PC-9 (cell line): ENCODE measurements at regions of chr17 and their contacts with region 1.

Region 1: GRCh38 chr17:29807520-29808351 is 122.3 kb downstream of the SSH2 start:
- DNase-seq: peak in 1 of 2 experiments; percentile 55
- H3K4me3 ChIP-seq: no peak overlapping the region
- H3K27ac ChIP-seq: no peak overlapping the region
- H3K4me1 ChIP-seq: no peaks in the 10 kb centered on the region
- H3K27me3 ChIP-seq: no peaks in the 10 kb centered on the region
- CTCF ChIP-seq: peak; percentile 87

Region 2: GRCh38 chr17:29574732-29575504 is 232.8 kb before region 1 on chr17:
- CTCF ChIA-PET with region 1: no interaction called
- POLR2A ChIA-PET with region 1: no interaction called
- intact Hi-C with region 1: no loop called
- DNase-seq: peak in 1 of 2 experiments; percentile 15
- H3K4me3 ChIP-seq: no peak overlapping the region
- H3K27ac ChIP-seq: no peak overlapping the region
- H3K4me1 ChIP-seq: no peaks in the 10 kb centered on the region
- H3K27me3 ChIP-seq: no peaks in the 10 kb centered on the region
- CTCF ChIP-seq: no peak

Region 3: GRCh38 chr17:29613352-29613837 is 194.3 kb before region 1 on chr17:
- CTCF ChIA-PET with region 1: interaction called, 10 read pairs
- POLR2A ChIA-PET with region 1: no interaction called
- intact Hi-C with region 1: no loop called
- DNase-seq: no peak
- H3K4me3 ChIP-seq: no peak overlapping the region
- H3K27ac ChIP-seq: no peak overlapping the region
- H3K4me1 ChIP-seq: no peaks in the 10 kb centered on the region
- H3K27me3 ChIP-seq: no peaks in the 10 kb centered on the region
- CTCF ChIP-seq: no peak

Region 4: GRCh38 chr17:30021708-30022317 is 214.1 kb after region 1 on chr17:
- CTCF ChIA-PET with region 1: interaction called, 5 read pairs
- POLR2A ChIA-PET with region 1: no interaction called
- intact Hi-C with region 1: loop called (anchors 1 kb)
- DNase-seq: peak in 1 of 2 experiments; percentile 14
- H3K4me3 ChIP-seq: no peak overlapping the region
- H3K27ac ChIP-seq: no peak overlapping the region
- H3K4me1 ChIP-seq: no peaks in the 10 kb centered on the region; the same call in 1 of the 2 replicates
- H3K27me3 ChIP-seq: no peaks in the 10 kb centered on the region
- CTCF ChIP-seq: peak; percentile 93

Region 5: DNA sequence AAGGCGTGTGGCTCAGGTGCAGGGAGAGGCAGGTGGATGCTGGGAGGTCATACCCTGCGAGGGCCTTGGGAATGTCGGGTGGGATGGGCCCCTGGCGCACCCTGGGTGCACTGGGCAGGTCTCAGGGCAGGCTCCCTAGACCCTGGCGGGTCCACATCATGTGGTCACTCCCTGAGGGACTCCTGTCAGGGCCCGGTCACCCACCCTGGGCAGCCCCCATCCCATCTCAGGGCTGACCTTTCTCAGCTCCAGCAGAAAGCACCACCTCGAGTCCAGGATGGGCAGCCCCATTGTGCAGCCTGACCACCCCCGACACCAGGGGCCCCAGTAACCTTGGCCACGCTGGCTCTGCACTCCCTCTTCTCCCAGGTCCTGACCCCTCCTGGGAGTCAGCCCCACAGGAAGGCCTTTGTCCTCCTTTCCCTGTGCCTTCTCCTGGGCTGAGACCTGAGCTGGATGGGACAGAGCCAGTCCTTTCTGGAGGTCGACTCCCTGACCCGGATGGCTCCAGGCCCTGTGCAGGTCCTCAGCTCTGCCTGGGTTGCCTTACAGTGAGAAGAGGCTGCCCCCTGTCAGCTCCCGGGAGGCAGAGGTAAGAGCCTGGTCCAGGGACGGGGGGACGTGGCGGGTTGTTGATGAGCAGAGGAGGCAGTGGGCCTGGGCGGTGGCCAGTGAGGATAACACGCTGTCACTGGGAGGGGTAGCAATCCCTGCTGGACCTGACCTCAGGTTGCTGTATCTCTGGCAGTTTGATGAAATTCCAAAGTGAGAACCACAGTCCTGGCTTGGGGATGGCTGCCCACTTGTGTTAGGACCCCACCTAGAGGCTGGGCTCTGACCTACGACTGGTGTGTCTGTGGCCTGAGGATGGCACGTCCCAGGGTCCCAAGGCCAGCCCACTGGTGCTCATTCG is 747.4 kb after region 1 on chr17:
- CTCF ChIA-PET with region 1: interaction called, 14 read pairs
- POLR2A ChIA-PET with region 1: no interaction called
- intact Hi-C with region 1: no loop called
- DNase-seq: peak in 1 of 2 experiments; percentile 38
- H3K4me3 ChIP-seq: no peak overlapping the region
- H3K27ac ChIP-seq: no peak overlapping the region
- H3K4me1 ChIP-seq: peaks cover 14% of the 10 kb centered on the region
- H3K27me3 ChIP-seq: peaks cover 2% of the 10 kb centered on the region
- CTCF ChIP-seq: peak; percentile 50; the same call in 1 of the 2 replicates

Region 6: GRCh38 chr17:31122746-31123145 is 1315.0 kb after region 1 on chr17:
- CTCF ChIA-PET with region 1: interaction called, 18 read pairs
- POLR2A ChIA-PET with region 1: no interaction called
- intact Hi-C with region 1: no loop called
- DNase-seq: no peak
- H3K4me3 ChIP-seq: no peak overlapping the region
- H3K27ac ChIP-seq: no peak overlapping the region
- H3K4me1 ChIP-seq: no peaks in the 10 kb centered on the region
- H3K27me3 ChIP-seq: no peaks in the 10 kb centered on the region
- CTCF ChIP-seq: no peak